ENCODE measurements at regions of chr5 and their contacts with region 1.

Region 1: GRCh38 chr5:75236322-75237316 is at the start of gene ANKRD31:
- DNase-seq: peak; percentile 90
- H3K4me3 Mint-ChIP-seq: peak within 1 kb of the TSS; percentile 96
- H3K27ac Mint-ChIP-seq: peak within 1 kb of the TSS; percentile 94
- H3K4me1 Mint-ChIP-seq: peaks cover 15% of the 10 kb centered on the region
- H3K27me3 Mint-ChIP-seq: no peaks in the 10 kb centered on the region
- total RNA-seq, gene ANKRD31: 0.29 to 0.33 TPM

Region 2: GRCh38 chr5:74934949-74935751 is 301.5 kb before region 1 on chr5:
- CTCF ChIA-PET with region 1: interaction called, 10 read pairs
- POLR2A ChIA-PET with region 1: no interaction called
- intact Hi-C with region 1: loop called (anchors 10 kb)
- DNase-seq: peak; percentile 44
- H3K4me3 Mint-ChIP-seq: peak overlapping the region; percentile 42
- H3K27ac Mint-ChIP-seq: peak overlapping the region; percentile 71
- H3K4me1 Mint-ChIP-seq: peaks cover 26% of the 10 kb centered on the region
- H3K27me3 Mint-ChIP-seq: peaks cover 7% of the 10 kb centered on the region

Region 3: DNA sequence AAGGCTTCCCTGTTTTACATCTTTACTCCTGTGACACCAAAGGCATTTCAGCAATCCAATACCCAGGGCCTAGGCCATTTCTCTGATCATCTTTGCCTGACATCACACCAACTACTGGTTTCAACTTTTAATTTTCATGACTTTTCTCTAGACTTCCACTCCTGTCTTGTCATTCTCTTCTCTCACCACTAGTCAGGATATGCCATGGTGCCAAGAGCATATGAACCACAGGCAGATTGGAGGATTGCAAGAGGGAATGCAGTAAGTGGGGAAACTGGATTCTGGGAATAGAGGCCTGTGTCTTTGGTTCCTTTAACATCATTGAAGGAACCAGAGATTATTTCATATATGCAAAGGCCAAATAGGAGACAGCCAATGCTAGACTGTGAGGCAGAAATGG is 69.3 kb before region 1 on chr5:
- CTCF ChIA-PET with region 1: no interaction called
- POLR2A ChIA-PET with region 1: no interaction called
- intact Hi-C with region 1: no loop called
- DNase-seq: no peak
- H3K4me3 Mint-ChIP-seq: no peak overlapping the region
- H3K27ac Mint-ChIP-seq: no peak overlapping the region
- H3K4me1 Mint-ChIP-seq: no peaks in the 10 kb centered on the region
- H3K27me3 Mint-ChIP-seq: no peaks in the 10 kb centered on the region

Region 4: GRCh38 chr5:75336625-75337339 is 100.2 kb after region 1 on chr5 and contains the start of gene HMGCR:
- CTCF ChIA-PET with region 1: interaction called, 31 read pairs
- POLR2A ChIA-PET with region 1: interaction called, 24 read pairs
- intact Hi-C with region 1: loop called (anchors 1 kb)
- DNase-seq: peak; percentile 99
- H3K4me3 Mint-ChIP-seq: no peak within 1 kb of the TSS
- H3K27ac Mint-ChIP-seq: no peak within 1 kb of the TSS
- H3K4me1 Mint-ChIP-seq: peaks cover 35% of the 10 kb centered on the region
- H3K27me3 Mint-ChIP-seq: no peaks in the 10 kb centered on the region
- total RNA-seq, gene HMGCR: 57.7 to 68.6 TPM

Region 5: GRCh38 chr5:75681125-75681830 is 444.7 kb after region 1 on chr5:
- CTCF ChIA-PET with region 1: interaction called, 40 read pairs
- POLR2A ChIA-PET with region 1: no interaction called
- intact Hi-C with region 1: loop called (anchors 1 kb)
- DNase-seq: no peak
- H3K4me3 Mint-ChIP-seq: no peak overlapping the region
- H3K27ac Mint-ChIP-seq: no peak overlapping the region
- H3K4me1 Mint-ChIP-seq: peaks cover 14% of the 10 kb centered on the region
- H3K27me3 Mint-ChIP-seq: no peaks in the 10 kb centered on the region

Region 6: DNA sequence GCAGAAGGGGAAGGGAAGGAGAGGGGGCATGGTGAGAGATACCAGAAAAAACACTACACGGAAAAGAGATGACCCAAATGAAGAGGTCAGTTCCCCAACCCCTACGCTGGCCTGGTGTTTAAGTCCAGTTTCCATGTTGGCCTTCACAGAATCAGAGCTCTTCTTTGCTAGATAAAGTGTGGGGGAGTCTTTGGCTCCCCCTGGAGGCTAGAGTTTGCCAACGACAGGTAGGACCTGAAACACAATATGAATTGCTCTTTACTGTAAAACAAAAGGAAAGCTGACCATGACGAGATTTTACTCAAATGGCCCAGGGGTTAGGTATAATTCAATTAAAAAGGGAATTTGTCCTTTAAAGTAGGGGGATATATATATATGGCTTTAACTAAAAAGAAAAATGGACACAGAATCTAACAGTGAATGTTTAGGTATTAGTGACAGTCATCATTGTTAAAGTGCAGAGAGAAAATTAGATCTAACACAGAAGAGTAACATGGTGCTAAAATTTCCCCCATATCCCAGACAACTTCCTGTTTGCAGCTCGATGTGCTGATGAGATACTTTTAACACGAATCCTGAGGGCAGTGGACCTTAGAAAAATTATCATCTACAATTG is 938.5 kb after region 1 on chr5:
- CTCF ChIA-PET with region 1: interaction called, 3 read pairs
- POLR2A ChIA-PET with region 1: no interaction called
- intact Hi-C with region 1: loop called (anchors 5 kb)
- DNase-seq: peak; percentile 70
- H3K4me3 Mint-ChIP-seq: no peak overlapping the region
- H3K27ac Mint-ChIP-seq: no peak overlapping the region
- H3K4me1 Mint-ChIP-seq: peaks cover 34% of the 10 kb centered on the region
- H3K27me3 Mint-ChIP-seq: no peaks in the 10 kb centered on the region